Right ventricle myocardium inferior (tissue), 1 donor: ENCODE measurements at regions of chr1 and their contacts with region 1.

Region 1: GRCh38 chr1:151146412-151147140 is at the start of gene SEMA6C:
- DNase-seq: peak; percentile 98
- ATAC-seq: peak; percentile 97
- total RNA-seq, gene SEMA6C: 57.6 TPM

Region 2: GRCh38 chr1:150876119-150876454 is 270.5 kb before region 1 on chr1:
- intact Hi-C with region 1: loop called (anchors 10 kb)
- DNase-seq: peak; percentile 82
- ATAC-seq: peak; percentile 60

Region 3: GRCh38 chr1:151024540-151025146 is 121.9 kb before region 1 on chr1:
- intact Hi-C with region 1: loop called (anchors 5 kb)
- DNase-seq: peak; percentile 84
- ATAC-seq: peak; percentile 82

Region 4: DNA sequence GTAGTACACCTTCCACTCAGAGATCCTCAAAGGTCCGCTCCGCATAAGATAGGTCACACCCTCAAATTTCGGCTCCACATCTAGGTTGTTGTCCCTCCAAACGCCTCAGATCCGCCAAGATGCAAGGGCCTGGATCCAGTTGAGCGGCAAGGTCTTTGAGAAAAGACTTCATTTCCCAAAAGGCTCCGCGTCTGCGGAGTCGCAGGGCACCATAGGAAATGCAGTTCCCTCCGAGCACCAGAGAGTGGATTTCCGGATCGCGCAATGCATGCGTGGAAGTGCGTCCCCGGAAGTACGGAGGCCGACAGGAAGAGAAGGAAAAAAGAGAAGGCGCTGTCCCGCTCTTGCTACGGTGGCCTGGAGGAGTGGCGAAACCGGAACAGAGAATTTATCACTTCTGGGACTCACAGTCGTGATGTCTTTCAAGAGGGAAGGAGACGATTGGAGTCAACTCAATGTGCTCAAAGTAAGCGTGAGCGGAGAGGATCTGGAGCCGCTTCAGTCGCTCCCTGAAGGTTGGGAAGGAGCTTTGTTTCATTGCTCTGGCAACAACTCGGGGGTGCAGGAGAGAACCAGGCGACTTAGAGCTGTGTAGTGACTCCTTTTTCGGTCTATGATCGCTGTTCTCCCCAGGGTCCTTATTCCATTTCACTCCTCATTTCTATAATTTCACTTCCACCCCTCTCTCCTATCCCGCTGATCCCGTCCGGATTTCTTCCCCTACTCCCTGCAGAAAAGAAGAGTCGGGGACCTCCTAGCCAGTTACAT is 19.3 kb after region 1 on chr1 and contains the starts of genes LYSMD1 and SCNM1:
- intact Hi-C with region 1: loop called (anchors 1 kb)
- DNase-seq: peak; percentile 97
- ATAC-seq: peak; percentile 95
- total RNA-seq, gene LYSMD1: 12.3 TPM
- total RNA-seq, gene SCNM1: 16.6 TPM